ENCODE measurements at regions of chr22 and their contacts with region 1.

Region 1: DNA sequence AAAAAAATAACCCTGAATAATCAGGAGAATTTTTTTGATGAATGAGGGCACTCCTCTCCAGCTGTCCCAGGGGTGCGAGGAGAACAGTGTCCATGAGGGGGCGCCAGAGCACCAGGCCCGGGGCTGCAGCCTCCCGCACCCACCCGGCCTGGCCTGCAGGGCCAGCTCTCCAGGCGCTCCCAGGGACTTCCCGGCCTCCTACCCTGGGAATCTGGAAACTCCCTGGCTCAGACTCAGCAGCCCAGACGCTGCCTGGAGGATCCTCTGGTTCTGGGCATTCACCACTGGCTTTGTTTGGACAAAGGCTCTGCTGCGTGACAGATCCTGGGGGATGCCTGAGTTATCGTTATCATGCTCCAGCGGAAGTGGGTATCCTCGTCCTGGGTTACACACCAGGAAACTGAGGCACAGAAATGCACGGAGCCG is 31.0 kb downstream of the MCM5 start:
- DNase-seq: peak; percentile 69 to 75
- ATAC-seq: peak; percentile 80 to 97 (median 93)
- H3K4me3 ChIP-seq: no peak overlapping the region
- H3K4me3 Mint-ChIP-seq: no peak overlapping the region
- H3K27ac ChIP-seq: no peak overlapping the region
- H3K27ac Mint-ChIP-seq: no peak overlapping the region
- H3K4me1 ChIP-seq: no peaks in the 10 kb centered on the region
- H3K4me1 Mint-ChIP-seq: peaks cover 0 to 5% of the 10 kb centered on the region in 2 donors
- H3K27me3 ChIP-seq: no peaks in the 10 kb centered on the region
- H3K27me3 Mint-ChIP-seq: no peaks in the 10 kb centered on the region
- CTCF ChIP-seq: peak; percentile 78

Region 2: DNA sequence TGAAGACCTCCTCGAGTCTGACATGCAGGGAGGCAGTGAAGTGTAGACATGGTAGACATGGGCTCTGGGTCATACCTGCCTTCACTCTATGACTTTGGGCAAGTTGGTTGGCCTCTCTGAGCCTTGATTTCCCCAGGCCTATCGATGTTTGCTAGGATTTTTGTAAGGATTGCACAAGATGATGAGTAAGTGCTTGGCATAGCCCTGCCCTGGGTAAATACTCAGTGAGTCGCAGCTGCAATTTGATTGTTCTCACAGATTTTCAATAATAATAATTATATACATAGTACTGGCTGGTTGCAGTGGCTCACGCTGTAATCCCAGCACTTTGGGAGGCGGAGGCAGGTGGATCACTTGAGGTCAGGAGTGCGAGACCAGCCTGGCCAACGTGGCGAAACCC is 12.8 kb before region 1 on chr22:
- intact Hi-C with region 1: no loop called
- DNase-seq: no peak
- ATAC-seq: no peak
- H3K4me3 ChIP-seq: no peak overlapping the region
- H3K4me3 Mint-ChIP-seq: no peak overlapping the region
- H3K27ac ChIP-seq: no peak overlapping the region
- H3K27ac Mint-ChIP-seq: no peak overlapping the region
- H3K4me1 ChIP-seq: no peaks in the 10 kb centered on the region
- H3K4me1 Mint-ChIP-seq: no peaks in the 10 kb centered on the region
- H3K27me3 ChIP-seq: no peaks in the 10 kb centered on the region
- H3K27me3 Mint-ChIP-seq: no peaks in the 10 kb centered on the region
- CTCF ChIP-seq: no peak

Region 3: DNA sequence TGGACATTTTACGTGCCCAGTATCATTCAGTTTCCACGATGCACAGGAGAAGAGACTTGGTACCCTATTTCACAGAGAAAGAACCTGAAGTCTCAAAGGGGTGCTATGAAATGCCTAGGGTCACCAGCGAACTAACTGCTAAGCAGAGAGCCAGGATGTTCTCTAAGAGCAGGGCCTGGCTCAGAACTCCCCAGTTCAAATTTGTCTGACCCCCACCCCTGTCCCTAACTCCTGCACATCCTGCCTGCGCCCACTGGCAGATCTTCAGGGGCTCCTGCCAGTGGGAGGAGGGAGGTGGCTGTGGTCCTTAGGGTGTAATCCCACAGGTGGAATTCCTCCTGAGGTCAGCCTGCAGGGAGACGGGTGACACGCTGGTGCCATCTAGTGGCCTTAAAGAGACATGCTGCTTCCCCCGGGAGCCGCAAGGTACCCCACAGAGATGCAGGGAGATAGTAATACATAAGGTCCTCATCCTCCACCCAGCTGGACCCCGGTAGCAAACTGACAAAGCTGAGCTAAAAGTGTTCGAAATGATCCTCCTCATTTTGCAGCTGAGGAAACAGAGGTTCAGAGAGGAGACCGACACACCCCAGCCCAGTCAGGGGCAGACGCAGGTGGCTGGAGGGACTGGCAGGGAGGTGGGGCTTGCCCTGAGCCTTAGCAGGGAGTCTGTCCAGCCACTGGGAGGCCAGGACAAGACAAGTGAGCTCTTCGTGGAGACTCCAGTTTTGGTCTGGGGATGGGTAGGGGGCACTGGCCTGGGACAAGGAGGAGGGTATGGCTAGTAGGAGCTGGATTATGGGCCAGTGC is 152.2 kb after region 1 on chr22:
- intact Hi-C with region 1: loop called (anchors 2 kb)
- DNase-seq: peak; percentile 44 to 83
- ATAC-seq: peak; percentile 60 to 82 (median 71)
- H3K4me3 ChIP-seq: no peak overlapping the region
- H3K4me3 Mint-ChIP-seq: no peak overlapping the region
- H3K27ac ChIP-seq: no peak overlapping the region
- H3K27ac Mint-ChIP-seq: no peak overlapping the region
- H3K4me1 ChIP-seq: no peaks in the 10 kb centered on the region
- H3K4me1 Mint-ChIP-seq: peaks cover 0 to 4% of the 10 kb centered on the region in 2 donors
- H3K27me3 ChIP-seq: no peaks in the 10 kb centered on the region
- H3K27me3 Mint-ChIP-seq: peaks cover 0 to 2% of the 10 kb centered on the region in 2 donors
- CTCF ChIP-seq: peak; percentile 95